ENCODE measurements at regions of chr19 and their contacts with region 1.

Region 1: GRCh38 chr19:48290771-48291488 is 21.0 kb downstream of the ZNF114 start:
- DNase-seq: peak; percentile 47 to 62 (median 60)
- H3K4me3 ChIP-seq: peak overlapping the region; percentile 1 to 72 (median 36)
- H3K4me3 Mint-ChIP-seq: peak overlapping the region; percentile 80 to 93
- H3K27ac ChIP-seq: no peak overlapping the region
- H3K27ac Mint-ChIP-seq: peak overlapping the region in 1 of 7 donors; percentile 63
- H3K4me1 ChIP-seq: peaks cover 8 to 10% of the 10 kb centered on the region in 2 donors
- H3K4me1 Mint-ChIP-seq: peaks cover 8% of the 10 kb centered on the region
- H3K27me3 ChIP-seq: peaks cover 0 to 5% of the 10 kb centered on the region in 2 donors
- H3K27me3 Mint-ChIP-seq: peaks cover 6 to 19% (median 16%) of the 10 kb centered on the region in 3 donors
- CTCF ChIP-seq: peak; percentile 90

Region 2: GRCh38 chr19:48102870-48103751 is 187.8 kb before region 1 on chr19:
- intact Hi-C with region 1: loop called (anchors 10 kb)
- DNase-seq: peak; percentile 21 to 43 (median 31)
- H3K4me3 ChIP-seq: no peak overlapping the region
- H3K4me3 Mint-ChIP-seq: no peak overlapping the region
- H3K27ac ChIP-seq: no peak overlapping the region
- H3K27ac Mint-ChIP-seq: peak overlapping the region in 2 of 7 donors; percentile 10 to 14
- H3K4me1 ChIP-seq: peaks cover 4 to 6% of the 10 kb centered on the region in 2 donors
- H3K4me1 Mint-ChIP-seq: peaks cover 7% of the 10 kb centered on the region
- H3K27me3 ChIP-seq: no peaks in the 10 kb centered on the region
- H3K27me3 Mint-ChIP-seq: peaks cover 1 to 4% (median 2%) of the 10 kb centered on the region in 3 donors
- CTCF ChIP-seq: peak; percentile 91

Region 3: DNA sequence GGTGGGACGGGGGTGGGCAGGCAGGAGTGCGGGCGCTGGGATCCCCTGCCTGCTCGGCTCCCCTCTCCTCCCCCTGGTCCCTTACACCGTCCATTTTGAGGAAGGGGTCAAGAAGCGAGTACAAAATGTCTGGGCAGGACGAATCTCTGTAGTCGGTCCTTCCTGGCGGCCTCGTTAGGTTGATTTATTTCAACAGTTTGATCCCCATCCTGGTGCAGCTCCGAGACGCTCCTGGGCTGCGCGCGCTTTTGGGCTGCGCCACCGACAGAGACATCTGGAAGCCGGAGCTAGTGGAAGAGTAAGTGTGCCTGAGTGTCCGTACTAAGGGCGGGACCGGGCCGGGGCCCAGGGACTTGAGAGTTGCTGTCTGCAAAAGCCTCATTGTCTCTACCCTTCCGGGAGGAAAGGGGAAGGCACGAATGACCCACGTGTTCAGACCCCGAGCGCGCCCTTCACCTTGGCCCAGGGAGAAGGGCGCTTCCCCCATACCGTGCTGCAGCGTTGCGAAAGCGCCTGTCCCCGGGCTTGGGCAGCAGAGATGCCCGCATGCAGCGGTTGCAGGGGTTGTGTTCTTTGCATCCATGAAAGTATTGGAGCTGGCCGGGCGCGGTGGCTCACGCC is 19.3 kb before region 1 on chr19:
- intact Hi-C with region 1: loop called in 1 of 2 experiments (anchors 1 kb)
- DNase-seq: peak; percentile 20 to 41 (median 35)
- H3K4me3 ChIP-seq: peak overlapping the region; percentile 49 to 81 (median 53)
- H3K4me3 Mint-ChIP-seq: peak overlapping the region; percentile 92 to 98
- H3K27ac ChIP-seq: no peak overlapping the region
- H3K27ac Mint-ChIP-seq: peak overlapping the region in 1 of 7 donors; percentile 63
- H3K4me1 ChIP-seq: peaks cover 14 to 17% of the 10 kb centered on the region in 2 donors
- H3K4me1 Mint-ChIP-seq: peaks cover 23% of the 10 kb centered on the region
- H3K27me3 ChIP-seq: no peaks in the 10 kb centered on the region
- H3K27me3 Mint-ChIP-seq: peaks cover 4 to 10% (median 4%) of the 10 kb centered on the region in 3 donors
- CTCF ChIP-seq: no peak

Region 4: DNA sequence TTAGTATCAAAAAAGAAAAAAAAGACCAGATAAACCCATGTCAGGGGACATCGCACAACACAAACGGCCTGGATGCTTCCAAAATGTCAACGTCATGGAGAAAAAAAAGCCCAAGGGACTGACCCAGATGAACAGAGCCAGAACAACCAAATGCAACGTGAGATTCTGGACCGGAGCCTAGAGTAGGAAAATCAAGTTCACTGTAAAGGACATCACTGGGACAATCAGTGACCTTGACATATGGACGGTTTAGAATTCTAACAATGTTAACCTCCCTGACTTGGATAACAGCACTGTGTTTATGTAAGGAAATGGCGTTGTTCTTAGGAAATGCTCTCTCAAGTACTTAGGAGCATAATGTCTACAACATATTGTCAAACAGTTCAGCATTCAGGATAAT is 19.3 kb after region 1 on chr19:
- intact Hi-C with region 1: no loop called
- DNase-seq: no peak
- H3K4me3 ChIP-seq: no peak overlapping the region
- H3K4me3 Mint-ChIP-seq: no peak overlapping the region
- H3K27ac ChIP-seq: no peak overlapping the region
- H3K27ac Mint-ChIP-seq: no peak overlapping the region
- H3K4me1 ChIP-seq: no peaks in the 10 kb centered on the region
- H3K4me1 Mint-ChIP-seq: no peaks in the 10 kb centered on the region
- H3K27me3 ChIP-seq: no peaks in the 10 kb centered on the region
- H3K27me3 Mint-ChIP-seq: peaks cover 0 to 5% (median 2%) of the 10 kb centered on the region in 3 donors
- CTCF ChIP-seq: no peak

Measured in CD14-positive monocyte (primary cell).